Ovary (tissue), 10 donors: ENCODE measurements at regions of chr2 and their contacts with region 1.

Region 1: DNA sequence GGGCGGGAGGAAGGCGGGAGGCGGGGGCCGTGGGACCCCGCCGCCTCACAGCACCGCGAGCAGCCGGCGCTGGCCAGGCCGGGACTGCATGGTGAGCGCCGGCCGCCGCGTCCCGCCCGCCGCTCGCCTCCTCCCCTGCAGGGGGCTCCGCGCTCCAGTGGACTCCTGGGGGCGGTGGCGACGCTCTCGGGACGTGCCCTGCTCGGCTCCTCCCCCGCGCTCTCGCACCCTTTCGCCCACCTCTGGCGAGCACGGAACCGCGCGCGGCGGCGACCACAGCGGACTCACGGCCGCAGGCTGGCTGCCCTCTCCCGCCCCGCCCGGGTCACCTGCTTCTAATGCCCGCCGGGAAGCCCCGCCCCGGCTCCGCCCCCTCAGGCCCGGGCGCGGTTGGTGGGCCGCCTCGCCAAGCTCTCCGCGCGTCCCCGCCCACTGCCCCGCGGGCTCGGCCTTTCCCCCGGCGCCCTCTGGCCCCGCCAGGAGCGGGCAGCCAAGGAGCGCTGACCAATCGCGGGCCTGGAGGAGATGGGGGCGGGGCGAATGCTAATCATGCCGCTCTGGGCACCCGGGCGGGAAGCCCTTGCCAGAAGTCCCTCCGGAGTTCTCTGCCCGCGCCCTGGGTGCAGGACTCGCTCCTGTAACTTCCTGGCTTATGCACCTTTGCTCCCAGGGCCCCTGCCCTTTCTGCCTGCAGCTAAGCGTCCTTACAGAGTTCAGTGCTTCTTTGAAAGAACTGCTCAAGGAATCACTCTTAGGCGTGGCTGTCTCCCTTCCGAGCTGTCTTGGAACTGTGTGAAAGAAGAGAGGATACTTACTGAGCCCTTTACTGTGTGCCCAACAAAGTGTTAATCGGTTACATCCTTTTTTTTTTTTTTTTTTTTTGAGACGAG is at the start of gene FZD5:
- DNase-seq: peak; percentile 94 to 97 (median 95)
- H3K4me3 ChIP-seq: peak within 1 kb of the TSS; percentile 93
- H3K27ac ChIP-seq: peak within 1 kb of the TSS; percentile 74 to 84
- H3K4me1 ChIP-seq: peaks cover 21% of the 10 kb centered on the region
- H3K27me3 ChIP-seq: no peaks in the 10 kb centered on the region
- CTCF ChIP-seq: peak; percentile 25 to 76 (median 60)
- EP300 ChIP-seq: no peak
- POLR2A ChIP-seq: peak; percentile 86
- total RNA-seq, gene FZD5: 3.2 to 13.0 (median 8.6) TPM

Region 2: GRCh38 chr2:207625018-207625907 is 144.6 kb before region 1 on chr2 and contains the start of gene METTL21A:
- intact Hi-C with region 1: loop called in 1 of 4 experiments (anchors 1 kb)
- DNase-seq: peak; percentile 84 to 90 (median 88)
- H3K4me3 ChIP-seq: peak within 1 kb of the TSS; percentile 73
- H3K27ac ChIP-seq: peak within 1 kb of the TSS; percentile 72 to 82
- H3K4me1 ChIP-seq: peaks cover 4% of the 10 kb centered on the region
- H3K27me3 ChIP-seq: no peaks in the 10 kb centered on the region
- CTCF ChIP-seq: peak in 2 of 3 donors; percentile 31 to 65
- EP300 ChIP-seq: no peak
- POLR2A ChIP-seq: peak; percentile 54
- total RNA-seq, gene METTL21A: 8.3 to 32.9 (median 11.2) TPM

Region 3: GRCh38 chr2:207926133-207926988 is 156.5 kb after region 1 on chr2:
- intact Hi-C with region 1: loop called in 1 of 4 experiments (anchors 10 kb)
- DNase-seq: peak; percentile 37 to 71 (median 48)
- H3K4me3 ChIP-seq: no peak overlapping the region
- H3K27ac ChIP-seq: peak overlapping the region; percentile 46
- H3K4me1 ChIP-seq: peaks cover 5% of the 10 kb centered on the region
- H3K27me3 ChIP-seq: no peaks in the 10 kb centered on the region
- CTCF ChIP-seq: no peak
- EP300 ChIP-seq: no peak
- POLR2A ChIP-seq: no peak

Region 4: GRCh38 chr2:207974216-207974605 is 204.4 kb after region 1 on chr2:
- intact Hi-C with region 1: loop called in 2 of 4 experiments (anchors 5 to 10 kb)
- DNase-seq: no peak
- H3K4me3 ChIP-seq: no peak overlapping the region
- H3K27ac ChIP-seq: no peak overlapping the region
- H3K4me1 ChIP-seq: peaks cover 2% of the 10 kb centered on the region
- H3K27me3 ChIP-seq: no peaks in the 10 kb centered on the region
- CTCF ChIP-seq: no peak
- EP300 ChIP-seq: no peak
- POLR2A ChIP-seq: no peak

Region 5: DNA sequence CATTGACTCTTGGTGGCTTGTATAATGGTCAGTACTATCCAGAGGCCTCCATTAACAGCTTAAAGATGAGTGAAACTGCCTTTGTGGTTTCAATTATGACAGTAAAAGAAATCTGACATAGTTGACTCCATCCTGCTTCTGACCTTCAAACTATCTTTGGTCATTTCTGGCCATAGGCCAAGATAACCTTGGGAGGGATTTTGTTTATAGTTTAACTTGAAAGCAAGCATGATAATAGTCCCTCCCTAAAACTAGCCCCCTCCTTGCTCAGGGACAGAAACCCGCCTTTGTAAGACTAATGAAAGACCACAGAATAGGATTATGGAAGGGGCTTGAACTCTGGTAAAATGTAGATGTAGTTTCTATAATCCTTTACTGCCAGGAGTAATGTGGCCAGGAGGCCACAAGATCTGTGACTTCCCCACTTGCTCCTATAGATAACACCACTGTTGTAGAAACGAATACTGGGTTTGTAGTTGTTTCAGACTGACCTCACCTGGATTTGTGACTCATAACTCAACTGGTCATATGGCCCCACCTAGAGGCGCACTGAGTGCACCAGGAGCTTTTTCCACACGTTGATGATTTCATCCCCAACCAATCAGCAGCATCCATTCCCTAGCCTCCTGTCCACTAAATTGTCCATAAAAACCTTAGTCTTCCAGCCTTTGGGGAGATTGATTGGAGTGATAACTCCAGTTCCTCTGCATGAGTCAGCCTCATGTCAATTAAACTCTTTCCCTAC is 264.1 kb after region 1 on chr2:
- intact Hi-C with region 1: loop called in 1 of 4 experiments (anchors 10 kb)
- DNase-seq: peak in 1 of 5 donors; percentile 25
- H3K4me3 ChIP-seq: no peak overlapping the region
- H3K27ac ChIP-seq: no peak overlapping the region
- H3K4me1 ChIP-seq: no peaks in the 10 kb centered on the region
- H3K27me3 ChIP-seq: no peaks in the 10 kb centered on the region
- CTCF ChIP-seq: no peak
- EP300 ChIP-seq: no peak
- POLR2A ChIP-seq: no peak

Region 6: DNA sequence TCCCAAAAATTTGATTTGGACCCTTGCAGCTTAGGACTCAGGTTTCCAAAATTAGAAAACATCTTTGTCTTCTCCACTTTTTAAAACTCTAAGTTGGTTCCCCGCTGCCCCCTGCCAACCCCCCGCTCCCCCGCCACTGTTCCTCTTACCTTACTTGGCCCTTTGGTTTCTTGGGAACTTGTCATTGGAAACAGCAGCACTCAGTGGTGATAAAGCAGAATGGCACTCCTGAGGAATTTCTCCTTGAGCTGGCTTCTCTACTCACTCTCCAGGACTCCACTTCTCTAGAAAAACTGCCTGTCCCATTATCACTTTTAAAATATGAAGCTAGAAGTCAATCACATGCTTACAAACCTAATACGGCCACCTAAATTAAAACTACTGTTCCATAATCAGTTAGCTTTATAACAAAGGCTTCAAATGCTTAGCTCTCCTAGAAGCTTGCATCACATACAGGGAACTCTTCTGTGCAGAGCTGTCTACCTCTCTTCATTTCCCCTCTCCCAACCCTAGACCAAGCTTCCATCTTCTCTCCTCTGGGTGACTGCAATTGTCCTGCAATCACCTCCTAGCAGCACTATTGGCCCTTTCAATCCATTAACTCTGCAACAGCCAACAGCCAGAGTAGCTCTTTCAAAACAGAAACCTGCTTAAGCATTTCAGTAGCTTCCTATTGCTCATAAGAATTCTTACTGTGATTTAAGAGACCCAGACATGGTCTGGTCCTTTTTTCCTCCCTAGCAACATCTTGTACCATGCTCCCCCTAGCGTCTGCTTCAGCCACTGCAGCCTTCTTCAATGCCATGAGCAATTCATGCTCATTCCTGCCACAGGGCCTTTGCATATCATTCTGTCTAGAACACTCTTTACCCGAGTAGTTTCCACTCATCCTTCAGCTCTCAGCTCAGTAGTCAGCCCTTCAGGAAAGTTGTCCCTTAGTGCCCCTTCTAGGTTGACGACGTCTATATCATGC is 270.6 kb after region 1 on chr2:
- intact Hi-C with region 1: loop called in 2 of 4 experiments (anchors 5 to 10 kb)
- DNase-seq: peak; percentile 40 to 69 (median 59)
- H3K4me3 ChIP-seq: no peak overlapping the region
- H3K27ac ChIP-seq: no peak overlapping the region
- H3K4me1 ChIP-seq: no peaks in the 10 kb centered on the region
- H3K27me3 ChIP-seq: no peaks in the 10 kb centered on the region
- CTCF ChIP-seq: peak in 2 of 3 donors; percentile 36 to 44
- EP300 ChIP-seq: no peak
- POLR2A ChIP-seq: no peak